WTC11 (cell line): ENCODE measurements at regions of chr12 and their contacts with region 1.

Region 1: DNA sequence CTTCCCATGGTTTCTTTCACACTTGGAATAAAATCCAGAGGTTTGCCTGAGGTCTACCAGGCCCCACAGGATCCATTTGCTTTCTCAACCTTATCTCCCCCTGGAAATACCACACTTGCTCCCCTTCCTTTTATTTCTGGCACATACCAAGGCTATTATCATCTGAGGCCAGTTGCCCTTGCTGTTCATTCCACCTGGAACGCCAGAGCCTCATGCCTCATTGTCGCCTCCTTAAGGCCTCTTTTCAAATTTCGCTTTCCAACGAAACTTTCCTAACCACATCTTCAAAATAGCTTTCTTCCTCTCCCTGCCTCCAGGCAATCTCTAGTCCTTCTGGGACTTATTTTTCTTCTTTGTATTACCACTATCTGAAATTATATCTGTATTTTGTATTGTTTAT is 11.2 kb upstream of the LRIG3 start:
- DNase-seq: no peak
- ATAC-seq: peak; percentile 38
- H3K4me3 Mint-ChIP-seq: no peak overlapping the region
- H3K27ac Mint-ChIP-seq: no peak overlapping the region
- H3K4me1 Mint-ChIP-seq: peaks cover 4% of the 10 kb centered on the region
- H3K27me3 Mint-ChIP-seq: no peaks in the 10 kb centered on the region
- CTCF ChIP-seq: 0 out of 2 replicates have a peak, but pooled peaks have one; percentile 18

Region 2: DNA sequence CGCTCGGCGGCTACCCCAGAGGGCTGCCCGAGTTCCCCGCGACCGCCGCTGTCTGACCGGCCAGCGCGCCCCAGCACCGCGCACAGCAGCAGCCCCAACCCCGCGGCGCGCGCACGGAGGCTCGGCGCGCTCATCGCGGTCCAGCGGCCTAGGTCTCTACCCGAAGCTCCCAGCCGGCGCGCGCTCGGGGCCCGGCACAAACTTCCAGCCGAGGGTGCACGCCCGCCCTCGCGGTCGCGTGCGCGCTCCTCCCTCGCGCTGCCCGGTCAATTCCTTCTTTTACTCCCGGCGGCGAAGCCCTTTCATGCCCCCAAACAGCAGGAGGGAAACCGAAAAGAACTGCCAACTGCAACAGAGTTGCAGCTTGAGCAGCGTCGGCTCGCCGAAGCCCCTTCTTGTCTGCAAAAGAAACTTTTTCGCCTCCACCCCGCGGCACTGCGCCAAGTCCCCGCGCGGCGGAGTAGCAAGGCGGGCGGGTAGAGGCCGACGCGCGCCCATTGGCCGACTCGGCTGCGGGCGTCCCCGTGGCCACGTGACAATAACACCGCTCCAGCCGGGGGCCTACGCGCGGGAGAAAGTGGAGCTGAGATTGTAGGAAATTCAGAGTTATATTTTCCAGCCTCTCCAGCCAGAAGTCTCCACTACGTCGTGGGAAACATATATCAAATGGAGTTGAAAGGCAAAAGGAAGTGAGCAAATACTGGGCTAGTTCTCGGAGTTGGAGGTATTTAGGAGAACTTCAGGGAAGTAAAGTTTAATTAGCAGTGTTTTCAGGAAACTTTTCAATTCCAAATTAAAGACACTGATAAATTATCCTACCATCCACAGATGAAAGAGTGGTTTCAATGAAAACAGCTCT is 11.2 kb before region 1 on chr12 and contains the start of gene LRIG3:
- CTCF ChIA-PET with region 1: interaction called, 10 read pairs
- POLR2A ChIA-PET with region 1: no interaction called
- DNase-seq: peak; percentile 79
- ATAC-seq: peak; percentile 85
- H3K4me3 Mint-ChIP-seq: peak within 1 kb of the TSS; percentile 82
- H3K27ac Mint-ChIP-seq: peak within 1 kb of the TSS; percentile 84
- H3K4me1 Mint-ChIP-seq: peaks cover 44% of the 10 kb centered on the region
- H3K27me3 Mint-ChIP-seq: peaks cover 19% of the 10 kb centered on the region
- CTCF ChIP-seq: no peak
- total RNA-seq, gene LRIG3: 7.8 to 13.0 TPM (median 8.5 TPM) in 3 replicates